ENCODE measurements at regions of chr22 and their contacts with region 1.

Region 1: GRCh38 chr22:23709107-23709506 is 18.3 kb downstream of the RGL4 start:
- DNase-seq: no peak
- ATAC-seq: no peak
- H3K4me3 Mint-ChIP-seq: no peak overlapping the region
- H3K27ac Mint-ChIP-seq: peak overlapping the region; percentile 68
- H3K4me1 Mint-ChIP-seq: peaks cover 64% of the 10 kb centered on the region
- H3K27me3 Mint-ChIP-seq: no peaks in the 10 kb centered on the region

Region 2: DNA sequence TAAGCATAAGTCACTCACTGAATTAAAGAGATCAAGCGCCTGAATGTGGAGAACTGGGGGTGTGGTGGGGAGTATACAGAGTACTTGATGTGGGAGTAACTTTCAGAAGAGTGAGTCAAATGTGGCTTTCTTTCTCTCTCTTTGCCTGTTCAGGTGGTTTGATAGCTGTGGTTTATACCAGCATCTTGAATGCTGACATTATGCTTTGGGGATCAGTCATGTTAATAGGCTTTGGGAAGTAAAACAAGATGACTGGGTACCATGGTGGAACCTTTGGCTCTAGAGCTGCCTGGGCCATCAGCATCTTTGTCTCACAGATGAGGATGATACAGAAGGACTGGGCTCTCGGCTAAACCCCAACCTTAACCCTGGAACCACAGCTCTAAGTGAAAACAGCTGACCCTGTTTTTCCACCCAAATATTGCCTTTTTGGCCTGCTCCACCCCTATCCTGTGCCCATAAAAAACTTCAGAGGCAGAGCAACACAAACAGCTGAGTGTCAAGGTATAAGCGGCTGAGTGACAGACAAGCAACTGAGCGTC is 697.0 kb before region 1 on chr22:
- CTCF ChIA-PET with region 1: no interaction called
- POLR2A ChIA-PET with region 1: no interaction called
- intact Hi-C with region 1: loop called in 1 of 2 experiments (anchors 5 kb)
- DNase-seq: peak; percentile 72
- ATAC-seq: peak; percentile 93
- H3K4me3 Mint-ChIP-seq: no peak overlapping the region
- H3K27ac Mint-ChIP-seq: peak overlapping the region; percentile 45
- H3K4me1 Mint-ChIP-seq: peaks cover 30% of the 10 kb centered on the region
- H3K27me3 Mint-ChIP-seq: peaks cover 51% of the 10 kb centered on the region

Region 3: GRCh38 chr22:23240639-23241389 is 468.3 kb before region 1 on chr22:
- CTCF ChIA-PET with region 1: no interaction called
- POLR2A ChIA-PET with region 1: no interaction called
- intact Hi-C with region 1: loop called in 1 of 2 experiments (anchors 2 kb)
- DNase-seq: peak; percentile 72
- ATAC-seq: peak; percentile 34
- H3K4me3 Mint-ChIP-seq: no peak overlapping the region
- H3K27ac Mint-ChIP-seq: peak overlapping the region; percentile 84
- H3K4me1 Mint-ChIP-seq: peaks cover 93% of the 10 kb centered on the region
- H3K27me3 Mint-ChIP-seq: no peaks in the 10 kb centered on the region

Region 4: GRCh38 chr22:23521441-23522113 is 187.5 kb before region 1 on chr22:
- CTCF ChIA-PET with region 1: no interaction called
- POLR2A ChIA-PET with region 1: no interaction called
- intact Hi-C with region 1: loop called in 1 of 2 experiments (anchors 5 kb)
- DNase-seq: peak; percentile 85
- ATAC-seq: peak; percentile 97
- H3K4me3 Mint-ChIP-seq: peak overlapping the region; percentile 44
- H3K27ac Mint-ChIP-seq: no peak overlapping the region
- H3K4me1 Mint-ChIP-seq: peaks cover 5% of the 10 kb centered on the region
- H3K27me3 Mint-ChIP-seq: peaks cover 19% of the 10 kb centered on the region

Region 5: GRCh38 chr22:23696326-23696851 is 12.7 kb before region 1 on chr22:
- CTCF ChIA-PET with region 1: interaction called, 6 read pairs
- POLR2A ChIA-PET with region 1: interaction called, 3 read pairs
- intact Hi-C with region 1: loop called (anchors 1 kb)
- DNase-seq: peak; percentile 91
- ATAC-seq: peak; percentile 100
- H3K4me3 Mint-ChIP-seq: peak overlapping the region; percentile 90
- H3K27ac Mint-ChIP-seq: peak overlapping the region; percentile 100
- H3K4me1 Mint-ChIP-seq: peaks cover 47% of the 10 kb centered on the region
- H3K27me3 Mint-ChIP-seq: no peaks in the 10 kb centered on the region

Region 6: DNA sequence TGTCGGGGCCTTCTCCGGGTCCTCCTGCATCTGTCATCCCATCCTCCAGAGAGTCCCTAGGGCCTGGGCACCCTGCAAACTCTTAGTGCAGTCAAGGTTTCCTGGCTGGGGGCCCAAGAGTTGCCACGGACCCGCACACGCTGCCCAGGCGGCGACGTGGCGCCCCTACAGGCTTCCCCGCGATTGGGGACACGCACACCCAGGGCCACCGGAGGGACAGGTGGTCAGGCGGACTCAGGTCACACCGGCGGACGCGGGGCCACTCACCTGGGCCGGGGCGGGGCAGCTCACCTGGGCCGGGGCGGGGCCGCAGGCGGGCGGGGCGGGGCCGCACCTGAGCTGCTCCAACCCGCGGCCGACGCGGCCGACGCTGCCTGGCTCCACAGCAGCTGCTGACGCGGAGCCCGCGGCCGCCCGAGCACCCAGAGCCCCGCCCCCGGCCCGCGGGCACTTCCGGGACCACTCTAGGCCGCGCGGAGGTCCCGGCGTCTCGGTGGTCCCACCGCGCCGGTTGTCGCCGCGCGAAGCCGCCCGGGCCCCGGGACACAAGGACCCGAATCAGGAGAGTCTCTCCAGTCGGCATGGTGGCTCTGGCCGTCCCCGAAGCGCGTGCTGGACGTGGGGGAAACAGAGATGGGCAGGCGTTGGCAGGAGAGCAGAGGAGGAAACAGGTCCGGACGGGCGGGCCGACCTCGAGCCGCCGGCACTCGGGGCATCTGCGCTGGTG is 41.8 kb after region 1 on chr22 and contains the start of gene ZNF70:
- CTCF ChIA-PET with region 1: no interaction called
- POLR2A ChIA-PET with region 1: interaction called, 3 read pairs
- intact Hi-C with region 1: loop called (anchors 2 to 5 kb)
- DNase-seq: peak; percentile 91
- ATAC-seq: peak; percentile 99
- H3K4me3 Mint-ChIP-seq: peak within 1 kb of the TSS; percentile 77
- H3K27ac Mint-ChIP-seq: peak within 1 kb of the TSS; percentile 56
- H3K4me1 Mint-ChIP-seq: peaks cover 11% of the 10 kb centered on the region
- H3K27me3 Mint-ChIP-seq: peaks cover 2% of the 10 kb centered on the region
- total RNA-seq, gene ZNF70: 1.6 to 1.7 TPM

Region 7: DNA sequence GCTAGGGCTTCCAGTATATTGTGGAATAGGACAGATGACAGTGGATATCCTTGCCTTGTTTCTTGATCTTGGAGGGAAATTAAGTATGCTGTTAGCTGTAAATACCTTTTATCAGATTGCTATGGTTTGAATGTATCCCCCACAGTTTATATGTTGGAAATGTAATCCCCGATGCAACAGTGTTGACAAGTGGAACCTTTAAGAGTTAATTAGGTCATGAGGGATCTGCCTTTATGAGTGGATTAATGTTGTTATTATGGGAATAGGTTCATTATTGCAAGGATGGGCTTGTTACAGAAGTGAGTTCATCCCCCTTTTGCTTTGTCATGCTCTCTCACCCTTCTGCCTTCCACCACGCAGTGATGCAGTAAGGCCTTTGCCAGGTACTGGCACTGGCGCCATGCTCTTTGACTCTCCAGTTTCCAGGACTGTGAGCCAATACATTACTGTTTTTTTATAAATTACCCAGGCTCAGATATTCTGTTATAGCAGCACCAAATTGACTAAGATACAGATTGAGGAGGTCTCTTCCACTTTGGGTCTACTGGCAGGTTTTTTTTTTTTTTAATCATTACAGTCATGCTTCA is 318.4 kb after region 1 on chr22:
- CTCF ChIA-PET with region 1: no interaction called
- POLR2A ChIA-PET with region 1: no interaction called
- intact Hi-C with region 1: no loop called
- DNase-seq: no peak
- ATAC-seq: no peak
- H3K4me3 Mint-ChIP-seq: no peak overlapping the region
- H3K27ac Mint-ChIP-seq: no peak overlapping the region
- H3K4me1 Mint-ChIP-seq: peaks cover 60% of the 10 kb centered on the region
- H3K27me3 Mint-ChIP-seq: no peaks in the 10 kb centered on the region